HEK293T (cell line): ENCODE measurements at regions of chr15 and their contacts with region 1.

Region 1: GRCh38 chr15:91258425-91258779 is 158.3 kb downstream of the SV2B start:
- DNase-seq: peak; percentile 43

Region 2: GRCh38 chr15:91246998-91247397 is 11.4 kb before region 1 on chr15:
- CTCF ChIA-PET with region 1: interaction called, 20 read pairs
- POLR2A ChIA-PET with region 1: no interaction called
- DNase-seq: no peak